ENCODE measurements at regions of chr7 and their contacts with region 1.

Region 1: DNA sequence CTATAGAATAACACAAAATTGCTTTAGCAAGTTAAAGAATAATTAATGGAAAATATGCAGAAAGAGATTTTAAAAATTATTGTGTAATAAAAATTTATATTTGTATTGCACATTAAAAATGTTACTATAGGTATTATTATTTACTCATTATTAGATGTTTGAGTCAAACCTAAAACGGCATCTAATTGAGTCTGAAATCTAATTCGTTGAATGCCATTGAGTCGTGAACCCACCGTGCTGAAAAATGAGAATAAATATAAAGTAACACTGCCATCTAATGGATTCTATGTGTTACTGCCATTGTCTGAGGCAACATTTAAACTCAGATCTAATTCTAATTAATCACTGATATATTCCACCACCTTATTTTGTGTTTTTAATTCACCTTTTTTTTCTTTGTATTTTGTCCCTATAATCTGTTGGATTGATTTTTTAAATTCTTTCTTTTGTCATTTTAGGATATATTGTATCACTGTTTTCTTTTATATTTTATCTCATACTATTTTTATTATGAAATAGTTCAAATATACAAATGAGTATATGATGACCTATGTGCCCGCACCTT is 62.2 kb downstream of the SAMD9 start:
- DNase-seq: peak; percentile 62
- CTCF ChIP-seq: peak; percentile 58

Region 2: GRCh38 chr7:92621026-92621540 is 434.5 kb before region 1 on chr7:
- in situ Hi-C with region 1: loop called (anchors 5 kb)
- DNase-seq: peak; percentile 44
- CTCF ChIP-seq: peak; percentile 81

Region 3: DNA sequence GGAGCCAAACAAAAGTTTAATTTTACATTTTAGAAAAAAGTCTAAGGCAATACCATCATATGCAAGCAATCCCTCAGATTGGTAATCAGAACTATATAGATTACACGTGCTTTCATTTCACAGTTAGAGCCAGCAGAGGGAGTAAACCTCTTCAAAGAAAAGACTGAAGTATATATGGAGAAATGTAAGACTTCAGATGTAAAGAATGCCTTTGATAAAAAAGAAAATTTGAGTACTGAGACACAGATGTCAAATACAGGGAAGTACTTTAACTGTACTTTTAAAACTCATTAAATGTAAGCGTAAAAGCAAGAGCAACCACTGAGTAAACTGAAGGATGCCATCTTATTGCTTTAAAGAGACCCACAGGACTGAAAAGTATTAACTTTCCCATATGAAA is 364.0 kb before region 1 on chr7:
- in situ Hi-C with region 1: loop called (anchors 10 kb)
- DNase-seq: peak; percentile 35
- CTCF ChIP-seq: peak; percentile 64

Region 4: GRCh38 chr7:92833024-92833765 is 222.4 kb before region 1 on chr7:
- in situ Hi-C with region 1: loop called (anchors 25 kb)
- DNase-seq: peak; percentile 79
- CTCF ChIP-seq: peak; percentile 96